ENCODE measurements at regions of chr2 and their contacts with region 1.

Region 1: GRCh38 chr2:32063310-32064161 is at the start of gene SPAST:
- DNase-seq: peak; percentile 98
- total RNA-seq, gene SPAST: 8.1 TPM

Region 2: DNA sequence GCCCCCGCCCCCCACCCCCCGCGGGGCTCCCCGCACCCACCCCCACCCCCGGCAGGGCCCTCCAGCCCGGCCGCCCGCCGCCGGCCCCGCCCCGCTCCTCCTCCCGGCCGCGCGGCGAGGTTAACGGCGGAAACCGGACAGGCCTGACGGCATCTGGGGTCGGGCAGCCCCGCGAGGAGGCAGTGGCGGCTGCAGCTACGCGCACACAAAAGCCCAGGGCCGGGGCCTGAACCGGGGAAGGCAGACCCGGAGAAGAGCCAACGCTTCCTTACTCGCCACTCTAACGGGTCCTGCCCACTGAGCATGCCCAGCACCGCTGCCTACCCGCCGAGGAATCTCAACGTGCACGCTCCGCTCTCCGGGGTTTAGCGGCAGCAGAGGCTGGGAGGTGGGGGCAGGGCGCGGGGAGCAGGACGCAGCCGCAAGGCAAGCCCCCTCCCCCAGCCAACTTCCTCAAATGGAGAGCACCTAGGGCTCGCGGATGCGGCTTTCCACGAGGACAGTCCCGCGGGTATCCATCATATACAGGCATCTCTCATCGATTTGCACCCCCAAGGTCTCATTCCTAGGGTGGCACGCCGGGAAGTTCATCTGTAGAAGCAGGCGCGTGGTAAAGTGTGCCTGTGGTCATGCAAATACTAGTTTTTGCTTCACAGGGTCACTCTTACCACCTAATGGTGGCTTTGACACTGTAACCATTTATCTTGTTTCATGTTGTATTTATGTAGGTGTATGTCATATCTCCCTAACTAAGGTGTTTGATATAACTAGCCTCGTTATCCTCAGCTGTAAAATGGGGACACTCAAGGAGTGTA is 52.7 kb before region 1 on chr2 and contains the start of gene MEMO1:
- intact Hi-C with region 1: loop called (anchors 1 kb)
- DNase-seq: peak; percentile 98
- total RNA-seq, gene MEMO1: 70.7 TPM

Region 3: GRCh38 chr2:32039447-32040219 is 23.9 kb before region 1 on chr2 and contains the start of gene DPY30:
- intact Hi-C with region 1: loop called (anchors 2 kb)
- DNase-seq: peak; percentile 97
- total RNA-seq, gene DPY30: 37.2 TPM

Region 4: DNA sequence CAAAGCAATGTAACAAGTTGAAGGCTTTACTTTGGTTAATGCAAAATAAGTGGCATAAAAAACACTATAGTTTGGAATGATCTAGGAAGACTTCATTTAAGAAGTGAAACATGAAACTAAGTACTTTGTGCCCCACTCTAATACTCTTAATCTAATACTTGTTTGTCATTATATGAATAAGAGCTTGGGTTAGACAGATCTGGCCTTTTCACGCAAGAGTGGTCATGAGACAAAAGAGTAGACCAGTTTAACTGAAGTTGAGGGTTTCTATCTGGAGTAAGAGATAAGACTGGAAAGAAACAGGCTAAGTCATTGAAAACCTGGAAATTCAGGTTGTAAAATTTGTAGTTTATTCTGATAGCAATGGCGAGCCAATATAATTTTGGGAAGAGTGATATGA is 105.0 kb after region 1 on chr2:
- intact Hi-C with region 1: loop called (anchors 1 kb)
- DNase-seq: no peak